Transverse colon (tissue), 4 donors: ENCODE measurements at regions of chr2 and their contacts with region 1.

Region 1: GRCh38 chr2:78532762-78533379 is 492.6 kb upstream of the REG3G start:
- DNase-seq: no peak
- H3K4me3 ChIP-seq: no peak overlapping the region
- H3K27ac ChIP-seq: no peak overlapping the region
- H3K4me1 ChIP-seq: no peaks in the 10 kb centered on the region
- H3K27me3 ChIP-seq: no peaks in the 10 kb centered on the region
- CTCF ChIP-seq: no peak
- EP300 ChIP-seq: no peak
- POLR2A ChIP-seq: no peak

Region 2: DNA sequence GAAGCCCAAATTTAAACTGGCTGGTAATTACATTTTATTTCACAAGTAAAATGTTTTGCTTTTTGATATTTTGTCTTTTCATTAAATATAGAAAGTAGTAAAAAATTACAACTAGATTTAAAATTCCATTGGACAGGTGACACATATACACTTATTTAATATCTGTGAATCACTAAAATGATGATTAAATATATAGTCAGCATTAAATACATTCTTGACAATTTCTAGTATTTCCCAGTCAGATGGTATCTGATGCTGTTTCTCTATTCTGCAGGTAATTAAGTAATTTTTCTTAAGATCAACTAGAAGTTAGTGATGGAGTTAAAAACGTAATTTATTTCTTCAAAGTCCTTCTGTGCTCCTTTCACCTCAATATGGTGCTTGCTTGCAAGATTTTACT is 1248.5 kb before region 1 on chr2:
- in situ Hi-C with region 1: no loop called
- intact Hi-C with region 1: no loop called
- DNase-seq: no peak
- H3K4me3 ChIP-seq: no peak overlapping the region
- H3K27ac ChIP-seq: no peak overlapping the region
- H3K4me1 ChIP-seq: no peaks in the 10 kb centered on the region
- H3K27me3 ChIP-seq: no peaks in the 10 kb centered on the region
- CTCF ChIP-seq: no peak
- EP300 ChIP-seq: no peak
- POLR2A ChIP-seq: no peak

Region 3: GRCh38 chr2:78553866-78554647 is 21.2 kb after region 1 on chr2:
- in situ Hi-C with region 1: no loop called
- intact Hi-C with region 1: loop called (anchors 1 kb)
- DNase-seq: no peak
- H3K4me3 ChIP-seq: no peak overlapping the region
- H3K27ac ChIP-seq: no peak overlapping the region
- H3K4me1 ChIP-seq: no peaks in the 10 kb centered on the region
- H3K27me3 ChIP-seq: no peaks in the 10 kb centered on the region
- CTCF ChIP-seq: no peak
- EP300 ChIP-seq: no peak
- POLR2A ChIP-seq: no peak